ENCODE measurements at regions of chr19 and their contacts with region 1.

Region 1: DNA sequence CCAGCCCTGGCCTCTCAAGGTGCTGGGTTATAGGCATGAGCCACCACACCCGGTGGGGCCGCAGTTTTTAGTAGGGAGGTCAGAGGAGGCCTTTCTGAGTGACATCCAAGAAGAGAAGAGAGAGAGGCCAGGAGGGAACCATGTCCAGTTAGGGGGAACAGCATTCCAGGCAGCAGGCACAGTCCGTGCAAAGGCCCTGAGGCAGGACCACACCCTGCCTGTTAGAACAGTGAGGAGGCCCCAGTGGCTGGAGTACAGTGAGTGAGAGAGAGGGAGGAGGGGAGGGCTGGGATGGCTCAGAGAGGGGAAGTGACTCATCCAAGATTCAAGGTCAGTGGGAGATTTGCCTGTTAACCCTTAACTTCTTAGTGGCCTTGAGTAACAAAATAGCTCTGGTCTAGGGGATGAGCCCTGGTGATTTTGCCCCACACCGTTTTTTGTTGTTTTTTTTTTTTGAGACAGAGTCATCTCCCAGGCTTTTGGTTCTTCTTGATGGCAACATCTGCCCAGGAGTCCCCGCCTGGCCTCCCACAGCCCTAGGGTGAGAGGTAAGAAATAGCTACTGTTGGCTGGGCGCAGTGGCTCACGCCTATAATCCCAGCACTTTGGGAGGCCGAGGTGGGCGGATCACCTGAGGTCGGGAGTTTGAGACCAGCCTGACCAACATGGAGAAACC is 2.7 kb upstream of the PLIN3 start:
- DNase-seq: peak; percentile 55
- H3K4me3 Mint-ChIP-seq: peak overlapping the region; percentile 24
- H3K27ac Mint-ChIP-seq: peak overlapping the region; percentile 93
- H3K4me1 Mint-ChIP-seq: peaks cover 12% of the 10 kb centered on the region
- H3K27me3 Mint-ChIP-seq: no peaks in the 10 kb centered on the region
- CTCF ChIP-seq: no peak

Region 2: GRCh38 chr19:5031231-5032100 is 161.3 kb after region 1 on chr19:
- CTCF ChIA-PET with region 1: interaction called, 3 read pairs
- intact Hi-C with region 1: loop called (anchors 5 kb)
- DNase-seq: peak; percentile 88
- H3K4me3 Mint-ChIP-seq: no peak overlapping the region
- H3K27ac Mint-ChIP-seq: no peak overlapping the region
- H3K4me1 Mint-ChIP-seq: no peaks in the 10 kb centered on the region
- H3K27me3 Mint-ChIP-seq: no peaks in the 10 kb centered on the region
- CTCF ChIP-seq: peak; percentile 73

Measured in Calu3 (cell line).